Caco-2 (cell line): ENCODE measurements at regions of chr2 and their contacts with region 1.

Region 1: GRCh38 chr2:26503231-26503880 is 25.4 kb upstream of the OTOF start:
- DNase-seq: peak; percentile 92 to 93
- H3K4me3 ChIP-seq: peak overlapping the region; percentile 48
- H3K4me3 Mint-ChIP-seq: peak overlapping the region; percentile 78
- H3K27ac Mint-ChIP-seq: peak overlapping the region; percentile 37
- H3K4me1 ChIP-seq: no peaks in the 10 kb centered on the region
- H3K4me1 Mint-ChIP-seq: peaks cover 7% of the 10 kb centered on the region
- H3K27me3 ChIP-seq: no peaks in the 10 kb centered on the region
- H3K27me3 Mint-ChIP-seq: peaks cover 6% of the 10 kb centered on the region
- CTCF ChIP-seq: peak; percentile 84 to 89

Region 2: GRCh38 chr2:26223018-26223417 is 280.3 kb before region 1 on chr2:
- CTCF ChIA-PET with region 1: no interaction called
- POLR2A ChIA-PET with region 1: no interaction called
- intact Hi-C with region 1: no loop called
- DNase-seq: no peak
- H3K4me3 ChIP-seq: no peak overlapping the region
- H3K4me3 Mint-ChIP-seq: no peak overlapping the region
- H3K27ac Mint-ChIP-seq: no peak overlapping the region
- H3K4me1 ChIP-seq: no peaks in the 10 kb centered on the region
- H3K4me1 Mint-ChIP-seq: no peaks in the 10 kb centered on the region
- H3K27me3 ChIP-seq: no peaks in the 10 kb centered on the region
- H3K27me3 Mint-ChIP-seq: no peaks in the 10 kb centered on the region
- CTCF ChIP-seq: no peak

Region 3: GRCh38 chr2:26438926-26439325 is 64.4 kb before region 1 on chr2:
- CTCF ChIA-PET with region 1: no interaction called
- POLR2A ChIA-PET with region 1: no interaction called
- intact Hi-C with region 1: loop called (anchors 1 kb)
- DNase-seq: no peak
- H3K4me3 ChIP-seq: no peak overlapping the region
- H3K4me3 Mint-ChIP-seq: no peak overlapping the region
- H3K27ac Mint-ChIP-seq: no peak overlapping the region
- H3K4me1 ChIP-seq: peaks cover 13% of the 10 kb centered on the region
- H3K4me1 Mint-ChIP-seq: peaks cover 10% of the 10 kb centered on the region
- H3K27me3 ChIP-seq: no peaks in the 10 kb centered on the region
- H3K27me3 Mint-ChIP-seq: no peaks in the 10 kb centered on the region
- CTCF ChIP-seq: no peak